Kidney (tissue), 22 donors: ENCODE measurements at regions of chr20 and their contacts with region 1.

Region 1: GRCh38 chr20:6075428-6076219 is 21.8 kb upstream of the LRRN4 start:
- DNase-seq: peak in 1 of 5 donors; percentile 29
- H3K4me3 ChIP-seq: no peak overlapping the region
- H3K27ac ChIP-seq: no peak overlapping the region
- H3K4me1 ChIP-seq: no peaks in the 10 kb centered on the region
- H3K27me3 ChIP-seq: no peaks in the 10 kb centered on the region
- CTCF ChIP-seq: no peak

Region 2: GRCh38 chr20:5529331-5530148 is 546.1 kb before region 1 on chr20:
- intact Hi-C with region 1: loop called (anchors 5 kb)
- DNase-seq: peak; percentile 78 to 91 (median 84)
- H3K4me3 ChIP-seq: peak overlapping the region in 1 of 3 donors; percentile 31
- H3K27ac ChIP-seq: no peak overlapping the region
- H3K4me1 ChIP-seq: peaks cover 0 to 6% (median 4%) of the 10 kb centered on the region in 3 donors
- H3K27me3 ChIP-seq: no peaks in the 10 kb centered on the region
- CTCF ChIP-seq: peak; percentile 74

Region 3: GRCh38 chr20:6008254-6008653 is 67.4 kb before region 1 on chr20:
- intact Hi-C with region 1: no loop called
- DNase-seq: peak in 1 of 5 donors; percentile 24
- H3K4me3 ChIP-seq: peak overlapping the region in 2 of 3 donors; percentile 86 to 87
- H3K27ac ChIP-seq: peak overlapping the region in 1 of 2 donors; percentile 58
- H3K4me1 ChIP-seq: peaks cover 0 to 7% (median 0%) of the 10 kb centered on the region in 3 donors
- H3K27me3 ChIP-seq: no peaks in the 10 kb centered on the region
- CTCF ChIP-seq: no peak

Region 4: GRCh38 chr20:6277661-6278240 is 202.1 kb after region 1 on chr20:
- intact Hi-C with region 1: no loop called
- DNase-seq: peak in 2 of 5 donors; percentile 6 to 20
- H3K4me3 ChIP-seq: no peak overlapping the region
- H3K27ac ChIP-seq: no peak overlapping the region
- H3K4me1 ChIP-seq: no peaks in the 10 kb centered on the region
- H3K27me3 ChIP-seq: no peaks in the 10 kb centered on the region
- CTCF ChIP-seq: no peak